ENCODE measurements at regions of chr5 and their contacts with region 1.

Region 1: GRCh38 chr5:157476702-157477408 is 16.8 kb downstream of the NIPAL4 start:
- DNase-seq: no peak
- H3K4me3 ChIP-seq: no peak overlapping the region
- H3K27ac ChIP-seq: no peak overlapping the region
- H3K4me1 ChIP-seq: peaks cover 0 to 2% (median 0%) of the 10 kb centered on the region in 4 experiments; a peak in 3 of 7 replicates
- H3K27me3 ChIP-seq: no peaks in the 10 kb centered on the region
- CTCF ChIP-seq: peak; percentile 48 to 89 (median 80)
- EP300 ChIP-seq: no peak
- POLR2A ChIP-seq: no peak
- RAD21 ChIP-seq: peak; percentile 86 to 87

Region 2: DNA sequence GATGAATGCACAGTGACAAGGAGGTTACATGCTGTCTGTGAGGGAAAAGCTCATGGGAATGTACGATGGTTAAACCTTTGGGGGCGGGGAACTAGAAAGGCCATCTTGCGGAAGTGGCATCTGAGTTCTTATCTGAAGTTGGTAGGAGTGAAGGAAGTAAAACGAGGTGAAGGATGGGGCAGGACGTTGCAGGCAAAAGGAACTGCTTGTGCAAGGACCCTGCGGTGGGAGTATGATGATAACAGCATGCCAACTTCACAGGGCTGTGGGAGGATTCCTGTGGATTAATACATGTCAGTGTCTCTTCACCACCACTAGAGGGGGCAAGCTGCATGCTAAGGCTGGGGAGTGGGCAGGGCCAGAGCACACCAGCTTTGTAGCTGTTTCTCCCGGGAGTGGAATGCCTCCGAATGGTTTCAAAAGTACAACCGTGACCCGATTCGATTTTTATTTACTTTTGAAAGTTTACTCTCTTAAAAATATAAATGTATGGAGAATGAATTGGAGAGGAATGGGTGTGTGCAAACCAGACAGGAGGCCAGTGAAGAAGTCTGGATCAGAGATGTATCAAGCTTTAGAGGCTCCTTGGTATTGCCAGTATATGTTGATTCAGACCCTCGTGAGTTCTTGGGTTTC is 148.5 kb before region 1 on chr5:
- CTCF ChIA-PET with region 1: interaction called, 15 read pairs
- POLR2A ChIA-PET with region 1: no interaction called
- DNase-seq: peak in 1 of 2 experiments; percentile 54
- H3K4me3 ChIP-seq: no peak overlapping the region
- H3K27ac ChIP-seq: no peak overlapping the region
- H3K4me1 ChIP-seq: no peaks in the 10 kb centered on the region
- H3K27me3 ChIP-seq: no peaks in the 10 kb centered on the region
- CTCF ChIP-seq: peak; percentile 86 to 94 (median 89)
- EP300 ChIP-seq: no peak
- POLR2A ChIP-seq: no peak
- RAD21 ChIP-seq: peak; percentile 67 to 74

Region 3: GRCh38 chr5:157354800-157355199 is 122.1 kb before region 1 on chr5:
- CTCF ChIA-PET with region 1: interaction called, 55 read pairs
- POLR2A ChIA-PET with region 1: interaction called, 3 read pairs
- DNase-seq: peak in 1 of 2 experiments; percentile 62
- H3K4me3 ChIP-seq: no peak overlapping the region
- H3K27ac ChIP-seq: no peak overlapping the region
- H3K4me1 ChIP-seq: no peaks in the 10 kb centered on the region
- H3K27me3 ChIP-seq: no peaks in the 10 kb centered on the region
- CTCF ChIP-seq: peak; percentile 52 to 79 (median 58)
- EP300 ChIP-seq: no peak
- POLR2A ChIP-seq: no peak
- RAD21 ChIP-seq: peak; percentile 19 to 43; a peak in 2 of 4 replicates

Region 4: GRCh38 chr5:157370967-157371366 is 105.9 kb before region 1 on chr5:
- CTCF ChIA-PET with region 1: interaction called, 46 read pairs
- POLR2A ChIA-PET with region 1: interaction called, 4 read pairs
- DNase-seq: no peak
- H3K4me3 ChIP-seq: no peak overlapping the region
- H3K27ac ChIP-seq: no peak overlapping the region
- H3K4me1 ChIP-seq: peaks cover 0 to 5% (median 3%) of the 10 kb centered on the region in 4 experiments; a peak in 4 of 7 replicates
- H3K27me3 ChIP-seq: no peaks in the 10 kb centered on the region
- CTCF ChIP-seq: no peak
- EP300 ChIP-seq: no peak
- POLR2A ChIP-seq: no peak
- RAD21 ChIP-seq: no peak

Region 5: DNA sequence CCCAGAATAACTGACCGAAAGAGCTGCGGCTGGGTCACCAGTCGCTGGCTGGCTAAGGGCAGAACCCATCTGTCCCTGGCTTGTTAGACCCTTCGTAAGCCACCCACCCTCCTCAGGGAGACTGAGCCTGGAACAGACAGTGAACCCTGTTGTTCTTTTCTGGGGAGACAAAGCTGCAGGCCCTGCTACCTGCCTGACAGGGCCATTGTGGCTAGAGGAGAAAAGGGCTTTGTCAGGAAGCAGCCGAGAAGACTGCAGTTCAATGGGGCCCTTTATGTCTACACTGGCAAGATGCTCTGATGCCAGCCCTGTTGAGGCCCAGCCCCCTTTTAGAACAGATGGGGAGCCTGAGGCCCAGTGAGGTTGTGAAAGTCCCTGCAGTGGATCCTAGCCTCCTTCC is 20.6 kb before region 1 on chr5:
- CTCF ChIA-PET with region 1: interaction called, 112 read pairs
- POLR2A ChIA-PET with region 1: interaction called, 3 read pairs
- DNase-seq: peak in 1 of 2 experiments; percentile 14
- H3K4me3 ChIP-seq: no peak overlapping the region
- H3K27ac ChIP-seq: no peak overlapping the region
- H3K4me1 ChIP-seq: peaks cover 0 to 5% (median 4%) of the 10 kb centered on the region in 4 experiments; a peak in 6 of 7 replicates
- H3K27me3 ChIP-seq: peaks cover 9 to 22% (median 18%) of the 10 kb centered on the region in 4 experiments
- CTCF ChIP-seq: no peak
- EP300 ChIP-seq: no peak
- POLR2A ChIP-seq: no peak
- RAD21 ChIP-seq: no peak

Region 6: GRCh38 chr5:157596487-157596886 is 119.6 kb after region 1 on chr5:
- CTCF ChIA-PET with region 1: no interaction called
- POLR2A ChIA-PET with region 1: no interaction called
- DNase-seq: no peak
- H3K4me3 ChIP-seq: no peak overlapping the region
- H3K27ac ChIP-seq: no peak overlapping the region
- H3K4me1 ChIP-seq: no peaks in the 10 kb centered on the region
- H3K27me3 ChIP-seq: no peaks in the 10 kb centered on the region
- CTCF ChIP-seq: no peak
- EP300 ChIP-seq: no peak
- POLR2A ChIP-seq: no peak
- RAD21 ChIP-seq: no peak